A673 (cell line): ENCODE measurements at regions of chr10 and their contacts with region 1.

Region 1: GRCh38 chr10:117496616-117497028 is 45.9 kb upstream of the EMX2 start:
- DNase-seq: peak; percentile 84
- H3K4me3 ChIP-seq: no peak overlapping the region
- H3K27ac ChIP-seq: no peak overlapping the region
- H3K4me1 ChIP-seq: no peaks in the 10 kb centered on the region
- H3K27me3 ChIP-seq: peaks cover 39% of the 10 kb centered on the region
- CTCF ChIP-seq: peak; percentile 96

Region 2: GRCh38 chr10:117533507-117534281 is 37.1 kb after region 1 on chr10:
- CTCF ChIA-PET with region 1: no interaction called
- POLR2A ChIA-PET with region 1: no interaction called
- intact Hi-C with region 1: no loop called
- DNase-seq: no peak
- H3K4me3 ChIP-seq: no peak overlapping the region
- H3K27ac ChIP-seq: no peak overlapping the region
- H3K4me1 ChIP-seq: no peaks in the 10 kb centered on the region
- H3K27me3 ChIP-seq: peaks cover 98% of the 10 kb centered on the region
- CTCF ChIP-seq: no peak

Region 3: GRCh38 chr10:117616179-117616578 is 119.6 kb after region 1 on chr10:
- CTCF ChIA-PET with region 1: no interaction called
- POLR2A ChIA-PET with region 1: no interaction called
- intact Hi-C with region 1: no loop called
- DNase-seq: no peak
- H3K4me3 ChIP-seq: no peak overlapping the region
- H3K27ac ChIP-seq: no peak overlapping the region
- H3K4me1 ChIP-seq: no peaks in the 10 kb centered on the region
- H3K27me3 ChIP-seq: peaks cover 32% of the 10 kb centered on the region
- CTCF ChIP-seq: no peak

Region 4: GRCh38 chr10:118106426-118106825 is 609.8 kb after region 1 on chr10:
- CTCF ChIA-PET with region 1: interaction called, 3 read pairs
- POLR2A ChIA-PET with region 1: no interaction called
- intact Hi-C with region 1: loop called (anchors 5 kb)
- DNase-seq: peak; percentile 31
- H3K4me3 ChIP-seq: no peak overlapping the region
- H3K27ac ChIP-seq: no peak overlapping the region
- H3K4me1 ChIP-seq: no peaks in the 10 kb centered on the region
- H3K27me3 ChIP-seq: peaks cover 58% of the 10 kb centered on the region
- CTCF ChIP-seq: peak; percentile 63

Region 5: DNA sequence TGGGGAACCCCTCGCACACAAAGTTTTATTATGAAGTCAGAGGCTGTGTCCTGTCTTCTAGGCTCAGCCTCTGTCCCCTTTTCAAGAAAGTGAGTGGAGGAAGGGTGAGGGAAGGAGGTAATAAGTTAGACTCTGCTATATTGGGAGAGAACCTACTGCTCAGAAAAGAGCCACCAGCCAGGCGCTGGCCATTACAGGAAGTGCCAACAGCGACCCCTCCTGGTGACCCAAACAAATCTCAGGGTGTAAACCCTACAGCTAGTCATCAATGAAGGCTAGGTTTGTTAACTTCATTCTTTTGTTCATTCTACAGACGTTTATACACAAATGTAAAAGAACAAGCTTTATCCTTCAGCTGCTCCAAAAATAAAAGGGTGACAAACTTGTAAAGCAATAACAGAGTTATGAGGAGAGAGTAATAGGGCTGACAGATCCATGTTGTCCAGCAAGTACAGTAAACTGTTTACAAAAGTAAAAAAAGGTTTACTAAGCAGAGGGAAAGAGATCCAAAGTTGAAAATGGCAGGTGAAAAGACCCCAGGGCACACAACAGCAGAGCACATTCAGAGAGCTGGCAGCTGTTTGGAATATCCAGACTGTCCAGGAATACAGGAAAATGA is 762.8 kb after region 1 on chr10:
- CTCF ChIA-PET with region 1: interaction called, 8 read pairs
- POLR2A ChIA-PET with region 1: no interaction called
- intact Hi-C with region 1: loop called (anchors 5 kb)
- DNase-seq: peak; percentile 54
- H3K4me3 ChIP-seq: no peak overlapping the region
- H3K27ac ChIP-seq: no peak overlapping the region
- H3K4me1 ChIP-seq: no peaks in the 10 kb centered on the region
- H3K27me3 ChIP-seq: peaks cover 26% of the 10 kb centered on the region
- CTCF ChIP-seq: peak; percentile 85

Region 6: GRCh38 chr10:118459726-118460193 is 963.1 kb after region 1 on chr10:
- CTCF ChIA-PET with region 1: interaction called, 5 read pairs
- POLR2A ChIA-PET with region 1: no interaction called
- intact Hi-C with region 1: loop called (anchors 5 kb)
- DNase-seq: peak; percentile 72
- H3K4me3 ChIP-seq: no peak overlapping the region
- H3K27ac ChIP-seq: no peak overlapping the region
- H3K4me1 ChIP-seq: no peaks in the 10 kb centered on the region
- H3K27me3 ChIP-seq: no peaks in the 10 kb centered on the region
- CTCF ChIP-seq: peak; percentile 83